Endothelial cell of umbilical vein (primary cell): ENCODE measurements at regions of chr9 and their contacts with region 1.

Region 1: DNA sequence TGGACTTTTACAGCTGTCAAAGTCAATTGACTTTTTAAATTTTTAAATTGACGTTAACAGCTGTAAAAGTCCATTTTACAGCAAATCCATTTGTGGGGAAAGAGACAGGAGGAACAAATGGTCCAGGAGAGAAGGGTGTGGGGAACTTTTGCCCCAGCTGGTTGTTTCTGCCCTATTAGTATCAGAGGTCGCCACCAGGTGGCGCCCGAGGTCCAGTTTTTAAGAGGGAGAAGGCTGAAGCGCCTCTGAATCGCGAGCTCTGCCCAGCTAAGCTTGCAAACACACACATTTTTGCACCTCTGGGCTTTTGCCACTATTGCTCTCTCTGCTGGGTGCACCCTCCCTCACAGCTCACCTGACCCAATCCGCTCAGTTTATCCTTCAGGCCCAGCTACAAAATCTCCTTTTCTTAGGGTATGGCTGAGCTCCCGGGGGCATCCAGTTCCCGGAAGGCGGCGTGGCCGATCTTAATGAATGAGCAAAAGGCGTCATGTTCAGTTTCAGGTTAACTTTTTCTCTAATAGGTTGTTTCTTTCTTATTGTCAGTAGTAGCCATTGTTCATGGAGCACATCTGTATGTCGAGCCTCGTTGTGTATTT is 6.3 kb upstream of the TTLL11 start:
- DNase-seq: peak; percentile 60
- H3K4me3 ChIP-seq: no peak overlapping the region
- H3K27ac ChIP-seq: no peak overlapping the region
- H3K4me1 ChIP-seq: no peaks in the 10 kb centered on the region
- H3K27me3 ChIP-seq: peaks cover 0 to 2% of the 10 kb centered on the region in 2 experiments
- CTCF ChIP-seq: peak; percentile 77 to 85
- POLR2A ChIP-seq: no peak

Region 2: DNA sequence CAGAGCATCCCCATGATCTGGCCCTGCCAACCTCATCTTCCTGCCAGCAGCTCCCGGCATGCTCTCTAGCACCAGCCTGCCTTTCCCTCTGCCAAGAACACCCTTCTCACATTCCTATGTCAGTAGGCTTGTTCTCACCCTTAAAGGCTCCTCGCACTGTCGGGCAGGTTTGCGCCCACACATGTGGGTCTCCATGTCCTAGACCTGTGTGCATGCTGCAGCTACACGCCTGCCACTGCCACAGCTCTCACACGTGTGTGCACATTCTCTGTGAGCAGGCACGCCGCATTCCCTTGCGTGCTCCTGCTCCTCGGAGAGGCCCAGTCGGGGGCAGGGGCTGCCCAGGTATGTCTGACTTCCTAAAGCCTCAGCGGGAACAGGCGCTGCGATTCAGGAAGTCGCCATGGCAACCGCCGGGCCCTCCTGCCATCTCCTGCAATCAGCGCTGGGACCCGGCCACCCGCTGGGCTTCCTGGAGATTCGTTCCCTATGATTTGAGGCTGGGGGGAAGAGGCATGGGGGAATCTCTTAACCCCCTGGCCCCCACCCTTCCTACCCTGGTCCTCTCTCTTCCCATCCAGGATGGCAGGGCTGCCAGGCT is 32.1 kb after region 1 on chr9:
- CTCF ChIA-PET with region 1: interaction called, 331 read pairs
- POLR2A ChIA-PET with region 1: no interaction called
- dilution Hi-C with region 1: no loop called
- intact Hi-C with region 1: no loop called
- DNase-seq: no peak
- H3K4me3 ChIP-seq: no peak overlapping the region
- H3K27ac ChIP-seq: no peak overlapping the region
- H3K4me1 ChIP-seq: peaks cover 35% of the 10 kb centered on the region
- H3K27me3 ChIP-seq: no peaks in the 10 kb centered on the region
- CTCF ChIP-seq: no peak
- POLR2A ChIP-seq: no peak

Region 3: GRCh38 chr9:122445155-122445749 is 345.9 kb after region 1 on chr9:
- CTCF ChIA-PET with region 1: interaction called, 12 read pairs
- POLR2A ChIA-PET with region 1: no interaction called
- dilution Hi-C with region 1: no loop called
- intact Hi-C with region 1: no loop called
- DNase-seq: peak; percentile 84
- H3K4me3 ChIP-seq: no peak overlapping the region
- H3K27ac ChIP-seq: peak overlapping the region; percentile 57
- H3K4me1 ChIP-seq: peaks cover 14% of the 10 kb centered on the region
- H3K27me3 ChIP-seq: no peaks in the 10 kb centered on the region
- CTCF ChIP-seq: no peak
- POLR2A ChIP-seq: no peak

Region 4: GRCh38 chr9:122464633-122465567 is 365.5 kb after region 1 on chr9:
- CTCF ChIA-PET with region 1: interaction called, 23 read pairs
- POLR2A ChIA-PET with region 1: no interaction called
- dilution Hi-C with region 1: no loop called
- intact Hi-C with region 1: no loop called
- DNase-seq: peak; percentile 96
- H3K4me3 ChIP-seq: peak overlapping the region; percentile 24 to 96 (median 89)
- H3K27ac ChIP-seq: peak overlapping the region; percentile 26
- H3K4me1 ChIP-seq: peaks cover 7% of the 10 kb centered on the region
- H3K27me3 ChIP-seq: peaks cover 6 to 38% of the 10 kb centered on the region in 2 experiments
- CTCF ChIP-seq: peak; percentile 73 to 92
- POLR2A ChIP-seq: no peak